Activated naive CD4-positive, alpha-beta T cell treated with anti-CD3 and anti-CD28 coated beads for 36 hours (primary cell): ENCODE measurements at regions of chr6 and their contacts with region 1.

Region 1: GRCh38 chr6:90458353-90459224 is 128.3 kb downstream of the MAP3K7 start:
- DNase-seq: peak; percentile 95
- H3K4me3 Mint-ChIP-seq: peak overlapping the region; percentile 66
- H3K27ac Mint-ChIP-seq: peak overlapping the region; percentile 99
- H3K4me1 Mint-ChIP-seq: peaks cover 89% of the 10 kb centered on the region
- H3K27me3 Mint-ChIP-seq: no peaks in the 10 kb centered on the region

Region 2: DNA sequence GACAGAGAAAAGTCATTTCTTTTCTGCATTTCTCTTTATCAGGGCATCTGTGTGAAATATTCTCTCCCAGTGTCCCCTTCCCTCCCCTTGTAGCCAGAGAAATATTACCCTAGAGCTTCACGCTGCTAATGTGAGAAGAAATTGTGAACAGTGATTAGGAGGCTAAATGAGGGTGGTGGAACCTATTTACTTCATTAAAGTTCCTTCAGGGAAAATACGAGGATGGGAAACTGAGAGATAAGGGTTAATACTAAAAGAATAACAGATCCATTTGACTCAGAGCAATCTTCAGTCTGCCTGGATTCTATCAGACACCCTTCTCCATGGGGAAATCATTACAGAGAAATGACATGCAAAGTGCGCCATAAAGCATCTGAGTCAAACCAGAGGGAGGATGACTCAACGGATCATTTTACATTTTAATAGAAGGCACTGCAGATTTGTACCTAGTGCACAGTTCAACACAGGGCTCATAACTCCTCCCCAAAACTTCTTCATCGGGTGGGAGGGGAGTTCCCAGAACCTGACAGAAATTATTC is 433.0 kb before region 1 on chr6:
- CTCF ChIA-PET with region 1: no interaction called
- intact Hi-C with region 1: loop called (anchors 2 kb)
- DNase-seq: peak; percentile 85
- H3K4me3 Mint-ChIP-seq: peak overlapping the region; percentile 47
- H3K27ac Mint-ChIP-seq: peak overlapping the region; percentile 87
- H3K4me1 Mint-ChIP-seq: peaks cover 93% of the 10 kb centered on the region
- H3K27me3 Mint-ChIP-seq: no peaks in the 10 kb centered on the region

Region 3: DNA sequence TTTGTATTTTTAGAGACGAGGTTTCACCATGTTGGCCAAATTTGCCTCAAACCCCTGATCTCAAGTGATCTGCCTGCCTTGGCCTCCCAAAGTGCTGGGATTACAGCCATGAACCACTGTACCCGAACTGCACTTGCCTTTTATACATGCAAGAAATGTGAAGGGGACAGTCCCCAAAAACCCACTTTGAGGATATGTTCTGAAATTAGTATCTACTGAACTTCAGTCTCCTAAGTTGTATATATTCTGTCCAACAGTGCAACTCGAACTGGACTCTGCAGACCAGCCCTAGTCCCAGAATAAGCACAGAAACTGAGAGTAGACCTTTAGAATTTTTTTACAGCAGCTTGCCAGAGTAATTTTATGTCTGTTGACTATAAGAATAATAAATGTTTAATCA is 190.4 kb before region 1 on chr6:
- CTCF ChIA-PET with region 1: no interaction called
- intact Hi-C with region 1: no loop called
- DNase-seq: peak; percentile 50
- H3K4me3 Mint-ChIP-seq: peak overlapping the region; percentile 60
- H3K27ac Mint-ChIP-seq: peak overlapping the region; percentile 89
- H3K4me1 Mint-ChIP-seq: peaks cover 92% of the 10 kb centered on the region
- H3K27me3 Mint-ChIP-seq: no peaks in the 10 kb centered on the region

Region 4: DNA sequence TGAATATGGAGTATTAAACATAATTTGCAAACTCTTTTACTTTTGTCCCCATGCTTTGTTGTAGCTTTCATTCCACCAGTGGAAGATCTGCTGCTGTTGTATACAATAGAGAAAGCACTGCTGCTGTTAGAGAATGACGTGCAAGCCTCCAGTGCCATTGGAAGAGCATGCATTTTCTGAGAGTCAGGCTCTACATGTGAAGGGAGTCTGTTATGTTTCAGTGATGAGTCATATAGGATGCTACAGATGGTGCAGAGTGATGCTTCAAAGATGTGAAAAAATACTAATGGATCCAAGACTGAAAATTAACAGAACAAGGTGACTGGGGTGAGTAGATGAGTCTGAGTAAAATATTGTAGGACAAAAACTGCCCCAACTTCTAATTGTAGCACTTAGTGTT is 139.5 kb before region 1 on chr6:
- CTCF ChIA-PET with region 1: no interaction called
- intact Hi-C with region 1: loop called (anchors 1 kb)
- DNase-seq: peak; percentile 55
- H3K4me3 Mint-ChIP-seq: no peak overlapping the region
- H3K27ac Mint-ChIP-seq: peak overlapping the region; percentile 55
- H3K4me1 Mint-ChIP-seq: peaks cover 40% of the 10 kb centered on the region
- H3K27me3 Mint-ChIP-seq: no peaks in the 10 kb centered on the region

Region 5: GRCh38 chr6:90350689-90351554 is 107.7 kb before region 1 on chr6:
- CTCF ChIA-PET with region 1: no interaction called
- intact Hi-C with region 1: loop called (anchors 1 kb)
- DNase-seq: peak; percentile 76
- H3K4me3 Mint-ChIP-seq: peak overlapping the region; percentile 68
- H3K27ac Mint-ChIP-seq: peak overlapping the region; percentile 91
- H3K4me1 Mint-ChIP-seq: peaks cover 52% of the 10 kb centered on the region
- H3K27me3 Mint-ChIP-seq: no peaks in the 10 kb centered on the region

Region 6: GRCh38 chr6:90413867-90414266 is 44.7 kb before region 1 on chr6:
- CTCF ChIA-PET with region 1: interaction called, 4 read pairs
- intact Hi-C with region 1: loop called (anchors 1 kb)
- DNase-seq: peak; percentile 96
- H3K4me3 Mint-ChIP-seq: peak overlapping the region; percentile 71
- H3K27ac Mint-ChIP-seq: peak overlapping the region; percentile 94
- H3K4me1 Mint-ChIP-seq: peaks cover 69% of the 10 kb centered on the region
- H3K27me3 Mint-ChIP-seq: no peaks in the 10 kb centered on the region

Region 7: DNA sequence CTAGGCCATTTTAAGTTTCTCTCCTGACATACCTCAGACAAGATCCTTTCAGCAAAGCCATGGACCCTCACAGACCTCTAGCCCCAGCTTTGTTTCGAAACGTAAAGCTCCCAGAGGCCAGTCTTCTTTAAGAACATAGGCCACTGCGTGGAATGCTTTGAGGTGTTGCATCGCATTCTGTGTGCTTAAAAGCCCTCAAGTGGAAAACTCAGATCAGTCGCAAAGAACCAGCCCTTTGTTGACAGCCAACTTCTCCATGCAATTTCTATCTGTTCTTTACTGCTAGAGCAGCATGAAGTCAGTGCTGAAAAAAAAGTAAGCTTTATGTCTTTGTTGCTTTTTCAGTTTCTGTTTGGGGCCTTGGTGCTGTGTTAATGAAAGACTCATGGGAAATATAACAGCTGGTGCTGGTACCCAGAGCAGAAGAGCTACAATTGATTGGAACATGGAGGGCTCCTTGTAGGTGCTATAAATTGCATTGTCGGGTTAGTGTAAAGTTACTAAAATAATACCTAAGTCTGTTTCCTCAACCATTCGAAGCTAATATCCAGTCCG is 14.4 kb before region 1 on chr6:
- CTCF ChIA-PET with region 1: interaction called, 4 read pairs
- intact Hi-C with region 1: loop called (anchors 1 kb)
- DNase-seq: no peak
- H3K4me3 Mint-ChIP-seq: peak overlapping the region; percentile 62
- H3K27ac Mint-ChIP-seq: peak overlapping the region; percentile 95
- H3K4me1 Mint-ChIP-seq: peaks cover 56% of the 10 kb centered on the region
- H3K27me3 Mint-ChIP-seq: no peaks in the 10 kb centered on the region

Region 8: DNA sequence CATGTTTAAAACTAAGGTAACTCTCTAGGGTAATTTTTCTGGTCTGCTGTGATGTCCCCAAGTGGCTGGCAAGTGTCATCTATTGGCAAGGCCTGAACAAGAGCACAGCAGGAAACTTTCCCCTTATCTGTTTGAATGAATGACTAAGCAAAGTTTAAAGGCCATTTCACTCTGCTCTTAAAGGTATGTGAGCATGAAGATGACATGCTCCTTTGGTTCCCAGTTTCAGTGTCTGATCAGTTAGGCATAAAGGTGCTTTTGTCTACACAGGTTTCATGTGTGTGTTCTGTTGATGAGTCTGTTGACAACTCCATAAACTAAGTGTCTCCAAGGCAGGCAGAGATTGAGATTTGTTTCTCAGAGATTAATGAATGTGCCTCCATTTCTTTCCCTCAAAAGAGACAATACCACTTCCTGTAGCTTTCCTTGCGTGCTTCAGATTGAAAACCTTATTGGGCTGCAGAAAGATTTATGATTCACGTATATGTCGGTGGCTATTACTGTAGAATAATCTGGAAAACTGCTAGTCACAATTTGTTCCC is 44.3 kb after region 1 on chr6:
- CTCF ChIA-PET with region 1: no interaction called
- intact Hi-C with region 1: no loop called
- DNase-seq: no peak
- H3K4me3 Mint-ChIP-seq: no peak overlapping the region
- H3K27ac Mint-ChIP-seq: peak overlapping the region; percentile 9
- H3K4me1 Mint-ChIP-seq: peaks cover 11% of the 10 kb centered on the region
- H3K27me3 Mint-ChIP-seq: no peaks in the 10 kb centered on the region